Activated CD8-positive, alpha-beta memory T cell treated with anti-CD3 and anti-CD28 coated beads, Interleukin-2, amount 10 ng/mL, durations not matched to agents 7 days and 5 days (primary cell): ENCODE measurements at regions of chr7 and their contacts with region 1.

Region 1: GRCh38 chr7:157339777-157340677 is 3.2 kb downstream of the DNAJB6 start:
- DNase-seq: peak; percentile 79
- ATAC-seq: no peak
- H3K4me3 Mint-ChIP-seq: peak overlapping the region; percentile 64
- H3K27ac Mint-ChIP-seq: peak overlapping the region; percentile 76
- H3K4me1 Mint-ChIP-seq: peaks cover 52% of the 10 kb centered on the region
- H3K27me3 Mint-ChIP-seq: peaks cover 4% of the 10 kb centered on the region

Region 2: GRCh38 chr7:157238087-157238486 is 101.9 kb before region 1 on chr7:
- CTCF ChIA-PET with region 1: no interaction called
- DNase-seq: no peak
- ATAC-seq: no peak
- H3K4me3 Mint-ChIP-seq: no peak overlapping the region
- H3K27ac Mint-ChIP-seq: no peak overlapping the region
- H3K4me1 Mint-ChIP-seq: peaks cover 14% of the 10 kb centered on the region
- H3K27me3 Mint-ChIP-seq: no peaks in the 10 kb centered on the region

Region 3: DNA sequence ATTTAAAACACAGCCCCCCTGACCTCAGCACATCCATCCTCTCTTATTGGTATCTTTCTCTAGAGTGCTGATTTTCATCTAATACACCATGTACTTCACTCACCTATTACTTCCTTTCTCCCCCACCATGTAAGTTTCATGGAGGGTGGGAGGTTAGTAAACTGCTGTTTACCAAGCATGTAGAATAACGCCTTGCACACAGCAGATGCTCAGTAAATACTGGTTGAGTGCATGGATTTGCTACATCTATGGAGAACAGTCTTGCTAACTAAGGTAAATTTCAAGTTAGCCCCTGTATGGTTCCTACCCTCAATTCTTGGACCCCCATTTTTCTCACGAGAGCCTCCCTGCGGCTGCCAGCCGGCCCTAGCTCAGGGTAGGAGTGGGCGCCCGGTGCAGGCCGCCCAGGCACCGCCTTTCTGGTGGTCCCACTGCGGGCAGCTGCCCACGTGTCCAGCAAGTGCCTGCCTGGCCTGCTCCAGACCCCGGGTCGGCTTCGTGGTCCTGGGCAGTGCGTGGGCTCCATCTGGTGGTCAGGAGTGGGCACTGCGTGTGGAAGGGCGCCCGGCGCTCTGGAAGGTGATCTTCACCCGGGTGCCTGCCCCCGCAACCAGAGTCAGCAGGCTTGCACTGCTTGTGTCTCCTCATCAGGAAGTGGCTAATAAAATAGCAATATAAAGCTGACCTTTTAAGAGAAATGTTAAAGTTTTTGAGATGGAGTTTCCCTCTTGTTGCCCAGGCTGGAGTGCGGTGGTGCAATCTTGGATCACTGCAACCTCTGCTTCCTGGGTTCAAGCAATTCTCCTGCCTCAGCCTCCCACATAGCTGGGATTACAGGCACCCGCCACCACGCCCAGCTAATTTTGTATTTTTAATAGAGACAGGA is 66.6 kb before region 1 on chr7:
- CTCF ChIA-PET with region 1: interaction called, 18 read pairs
- DNase-seq: peak; percentile 68
- ATAC-seq: peak; percentile 63
- H3K4me3 Mint-ChIP-seq: no peak overlapping the region
- H3K27ac Mint-ChIP-seq: no peak overlapping the region
- H3K4me1 Mint-ChIP-seq: peaks cover 31% of the 10 kb centered on the region
- H3K27me3 Mint-ChIP-seq: no peaks in the 10 kb centered on the region

Region 4: GRCh38 chr7:157301610-157302120 is 38.4 kb before region 1 on chr7:
- CTCF ChIA-PET with region 1: interaction called, 13 read pairs
- DNase-seq: no peak
- ATAC-seq: no peak
- H3K4me3 Mint-ChIP-seq: peak overlapping the region; percentile 50
- H3K27ac Mint-ChIP-seq: peak overlapping the region; percentile 89
- H3K4me1 Mint-ChIP-seq: peaks cover 51% of the 10 kb centered on the region
- H3K27me3 Mint-ChIP-seq: peaks cover 3% of the 10 kb centered on the region

Region 5: GRCh38 chr7:157329447-157329846 is 10.6 kb before region 1 on chr7:
- CTCF ChIA-PET with region 1: interaction called, 13 read pairs
- DNase-seq: no peak
- ATAC-seq: no peak
- H3K4me3 Mint-ChIP-seq: no peak overlapping the region
- H3K27ac Mint-ChIP-seq: no peak overlapping the region
- H3K4me1 Mint-ChIP-seq: no peaks in the 10 kb centered on the region
- H3K27me3 Mint-ChIP-seq: peaks cover 29% of the 10 kb centered on the region